ENCODE measurements at regions of chr12 and their contacts with region 1.

Region 1: DNA sequence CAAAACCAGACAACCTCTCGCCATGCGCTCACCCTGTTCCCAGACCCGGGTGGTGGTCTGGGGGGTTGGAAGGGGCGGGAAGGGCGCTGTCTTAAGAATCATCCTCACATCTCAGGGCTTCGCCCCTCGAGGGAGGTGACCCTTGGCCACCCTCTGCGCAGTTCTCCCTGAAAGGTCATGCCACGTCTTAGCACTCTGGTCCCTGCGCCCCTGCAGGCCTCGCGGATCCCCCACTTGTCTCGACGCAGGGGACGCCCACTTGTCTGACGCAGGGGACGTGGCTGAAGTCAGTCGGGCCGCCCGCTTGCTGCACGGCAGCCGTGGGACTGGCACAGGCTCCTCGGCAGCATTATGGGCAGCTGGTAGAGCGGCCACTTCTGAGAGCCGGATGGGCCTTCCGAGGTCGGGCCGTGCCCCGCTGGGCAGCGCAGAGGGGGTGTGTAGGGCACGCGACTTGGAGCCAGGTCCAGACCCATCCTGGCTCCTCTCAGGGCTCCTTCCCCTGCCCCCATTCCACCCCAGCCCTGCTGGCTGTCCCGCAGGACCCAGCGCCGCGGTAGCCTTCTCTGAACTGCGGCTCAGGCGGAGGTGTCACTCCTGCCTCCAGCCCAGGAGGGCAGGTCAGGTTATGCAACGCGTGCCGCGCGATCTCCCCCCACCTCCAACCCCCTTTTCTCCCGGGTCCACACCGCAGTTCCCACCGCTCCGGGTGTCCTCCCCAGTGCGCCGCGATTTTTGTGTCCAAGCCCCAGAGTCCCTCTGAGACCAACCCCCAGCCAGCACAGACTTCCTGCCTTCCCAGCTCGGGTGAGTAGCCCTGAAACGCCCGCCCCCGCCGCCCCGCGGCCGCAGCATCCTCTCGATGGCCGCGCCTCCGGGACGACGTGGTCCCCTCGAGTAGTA is 40.9 kb upstream of the CAPRIN2 start:
- DNase-seq: peak; percentile 80
- H3K4me3 ChIP-seq: peak overlapping the region; percentile 16 to 76 (median 56)
- H3K27ac ChIP-seq: peak overlapping the region; percentile 97
- H3K4me1 ChIP-seq: peaks cover 39% of the 10 kb centered on the region
- H3K27me3 ChIP-seq: no peaks in the 10 kb centered on the region
- CTCF ChIP-seq: peak in 1 of 2 donors; percentile 14
- POLR2A ChIP-seq: peak; percentile 83

Region 2: DNA sequence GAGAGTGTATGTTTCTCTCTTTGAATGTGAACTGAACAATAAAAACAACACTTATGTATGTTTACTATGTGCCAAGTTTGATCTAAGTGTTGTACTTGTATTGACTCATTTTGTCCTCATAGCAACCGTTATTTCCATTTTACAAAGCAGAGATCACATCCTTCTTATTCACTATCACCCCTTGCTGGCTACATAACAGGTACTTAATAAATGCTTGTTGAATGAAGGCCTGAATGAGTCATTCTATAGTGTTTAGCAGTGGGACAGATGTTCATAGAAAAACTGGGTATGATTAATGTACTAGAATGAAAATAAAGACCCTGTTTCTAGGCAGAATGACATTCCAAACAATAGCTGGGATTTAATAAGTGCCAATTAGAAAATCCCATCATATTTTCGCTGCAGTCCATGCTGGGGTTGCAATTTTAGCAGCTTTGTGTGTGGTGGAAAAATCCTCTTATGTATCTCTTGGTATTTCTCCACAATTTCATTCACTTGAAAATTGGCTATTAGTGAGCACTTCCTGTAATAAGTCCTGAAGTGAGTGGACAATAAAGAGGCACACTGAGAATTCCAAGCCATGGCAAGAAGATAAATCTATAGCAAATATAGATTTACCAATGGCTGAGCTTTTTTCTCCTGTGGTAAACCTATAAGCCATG is 1560.6 kb before region 1 on chr12:
- CTCF ChIA-PET with region 1: no interaction called
- POLR2A ChIA-PET with region 1: no interaction called
- dilution Hi-C with region 1: no loop called
- intact Hi-C with region 1: loop called (anchors 2 kb)
- DNase-seq: peak; percentile 97
- H3K4me3 ChIP-seq: no peak overlapping the region
- H3K27ac ChIP-seq: peak overlapping the region; percentile 82
- H3K4me1 ChIP-seq: peaks cover 58% of the 10 kb centered on the region
- H3K27me3 ChIP-seq: no peaks in the 10 kb centered on the region
- CTCF ChIP-seq: no peak
- POLR2A ChIP-seq: no peak

Region 3: GRCh38 chr12:29970501-29970900 is 825.2 kb before region 1 on chr12:
- CTCF ChIA-PET with region 1: no interaction called
- POLR2A ChIA-PET with region 1: no interaction called
- dilution Hi-C with region 1: no loop called
- intact Hi-C with region 1: loop called (anchors 5 kb)
- DNase-seq: peak; percentile 90
- H3K4me3 ChIP-seq: no peak overlapping the region
- H3K27ac ChIP-seq: peak overlapping the region; percentile 79
- H3K4me1 ChIP-seq: peaks cover 21% of the 10 kb centered on the region
- H3K27me3 ChIP-seq: no peaks in the 10 kb centered on the region
- CTCF ChIP-seq: no peak
- POLR2A ChIP-seq: no peak

Region 4: DNA sequence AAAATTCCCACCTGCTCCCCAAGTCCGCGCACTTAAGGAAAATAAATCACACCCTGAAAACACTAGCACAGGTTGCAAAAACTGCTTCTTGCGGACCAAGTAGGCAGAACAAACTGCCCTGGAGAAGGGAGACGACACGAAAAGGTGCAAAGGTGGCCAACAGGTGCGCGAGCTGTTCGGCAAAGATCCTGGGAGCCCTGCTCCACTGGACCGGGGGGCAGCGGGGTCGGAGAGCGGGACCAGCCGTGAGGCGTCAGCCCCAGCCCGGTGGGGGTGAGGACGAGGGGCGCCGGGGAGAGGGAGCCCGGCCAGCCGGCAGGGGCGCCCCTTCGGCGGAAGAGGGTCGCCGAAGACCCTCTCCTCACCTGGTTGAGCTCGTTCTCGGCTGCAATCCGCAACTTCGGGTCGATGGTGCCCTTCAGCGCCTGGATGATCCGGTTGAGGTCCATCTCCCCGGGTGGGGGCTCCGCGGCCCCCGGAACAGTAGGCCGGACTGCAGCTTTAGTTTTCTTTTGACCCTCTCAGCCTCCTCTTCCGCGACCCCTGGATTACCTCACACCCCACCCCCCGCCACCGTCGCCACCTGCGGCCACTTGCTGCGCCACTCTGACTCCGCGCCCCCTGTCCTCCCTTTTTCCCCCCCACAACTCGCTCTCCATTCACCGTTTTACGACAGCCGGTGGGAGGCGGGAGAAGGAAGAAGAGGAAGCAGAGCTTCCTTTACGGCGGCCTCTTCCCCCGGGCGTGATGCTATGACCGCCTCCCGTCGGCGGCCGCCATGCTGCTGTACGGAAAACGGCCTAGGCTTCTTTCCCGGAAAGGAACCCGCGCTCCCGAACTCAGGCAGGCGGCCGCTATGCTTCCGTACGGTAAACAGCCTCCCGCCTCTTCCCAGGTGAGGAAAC is 100.2 kb before region 1 on chr12 and contains the start of gene IPO8:
- CTCF ChIA-PET with region 1: interaction called, 9 read pairs
- POLR2A ChIA-PET with region 1: no interaction called
- dilution Hi-C with region 1: no loop called
- intact Hi-C with region 1: loop called (anchors 1 kb)
- DNase-seq: peak; percentile 89
- H3K4me3 ChIP-seq: peak within 1 kb of the TSS; percentile 52 to 96 (median 78)
- H3K27ac ChIP-seq: peak within 1 kb of the TSS; percentile 26
- H3K4me1 ChIP-seq: peaks cover 20% of the 10 kb centered on the region
- H3K27me3 ChIP-seq: no peaks in the 10 kb centered on the region
- CTCF ChIP-seq: peak; percentile 20 to 59
- POLR2A ChIP-seq: peak; percentile 33
- total RNA-seq, gene IPO8: 44.7 and 52.5 TPM in 2 replicates

Region 5: GRCh38 chr12:30754709-30755394 is 40.8 kb before region 1 on chr12 and contains the start of gene CAPRIN2:
- CTCF ChIA-PET with region 1: interaction called, 55 read pairs
- POLR2A ChIA-PET with region 1: interaction called, 22 read pairs
- dilution Hi-C with region 1: no loop called
- intact Hi-C with region 1: loop called (anchors 1 kb)
- DNase-seq: peak; percentile 95
- H3K4me3 ChIP-seq: peak within 1 kb of the TSS; percentile 7 to 70 (median 53)
- H3K27ac ChIP-seq: peak within 1 kb of the TSS; percentile 38
- H3K4me1 ChIP-seq: peaks cover 15% of the 10 kb centered on the region
- H3K27me3 ChIP-seq: no peaks in the 10 kb centered on the region
- CTCF ChIP-seq: peak in 1 of 2 donors; percentile 20
- POLR2A ChIP-seq: peak; percentile 67
- total RNA-seq, gene CAPRIN2: 25.0 and 29.9 TPM in 2 replicates

Measured in endothelial cell of umbilical vein (primary cell).